Calu3 (cell line): ENCODE measurements at regions of chr3 and their contacts with region 1.

Region 1: GRCh38 chr3:78221300-78221699 is 1181.4 kb downstream of the ROBO2 start:
- DNase-seq: peak; percentile 7
- H3K4me3 Mint-ChIP-seq: no peak overlapping the region
- H3K27ac Mint-ChIP-seq: no peak overlapping the region
- H3K4me1 Mint-ChIP-seq: peaks cover 7% of the 10 kb centered on the region
- H3K27me3 Mint-ChIP-seq: no peaks in the 10 kb centered on the region
- CTCF ChIP-seq: no peak

Region 2: GRCh38 chr3:78116874-78117273 is 104.4 kb before region 1 on chr3:
- CTCF ChIA-PET with region 1: no interaction called
- intact Hi-C with region 1: no loop called
- DNase-seq: no peak
- H3K4me3 Mint-ChIP-seq: no peak overlapping the region
- H3K27ac Mint-ChIP-seq: no peak overlapping the region
- H3K4me1 Mint-ChIP-seq: no peaks in the 10 kb centered on the region
- H3K27me3 Mint-ChIP-seq: no peaks in the 10 kb centered on the region
- CTCF ChIP-seq: no peak

Region 3: DNA sequence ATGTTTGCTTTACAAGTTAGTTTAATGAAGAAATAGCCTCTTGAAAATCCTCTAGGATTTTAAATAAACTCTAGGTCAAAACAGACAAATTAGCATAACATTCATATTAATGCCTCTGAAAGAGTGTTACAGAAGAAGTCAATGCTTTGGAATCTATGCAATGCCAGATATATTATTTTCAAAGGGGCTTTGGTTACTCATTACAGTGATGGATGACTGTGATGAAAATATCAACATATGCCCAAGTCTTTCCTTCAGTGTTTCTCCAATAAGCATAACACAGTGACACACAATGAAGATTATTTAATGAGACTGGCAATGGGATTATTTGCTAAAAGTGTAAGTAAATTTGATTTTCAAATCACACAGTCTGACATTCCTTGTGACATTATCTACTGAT is 65.8 kb after region 1 on chr3:
- CTCF ChIA-PET with region 1: no interaction called
- intact Hi-C with region 1: no loop called
- DNase-seq: no peak
- H3K4me3 Mint-ChIP-seq: no peak overlapping the region
- H3K27ac Mint-ChIP-seq: no peak overlapping the region
- H3K4me1 Mint-ChIP-seq: peaks cover 8% of the 10 kb centered on the region
- H3K27me3 Mint-ChIP-seq: no peaks in the 10 kb centered on the region
- CTCF ChIP-seq: no peak

Region 4: GRCh38 chr3:78338405-78338804 is 117.1 kb after region 1 on chr3:
- CTCF ChIA-PET with region 1: no interaction called
- intact Hi-C with region 1: loop called (anchors 5 kb)
- DNase-seq: no peak
- H3K4me3 Mint-ChIP-seq: no peak overlapping the region
- H3K27ac Mint-ChIP-seq: no peak overlapping the region
- H3K4me1 Mint-ChIP-seq: no peaks in the 10 kb centered on the region
- H3K27me3 Mint-ChIP-seq: no peaks in the 10 kb centered on the region
- CTCF ChIP-seq: no peak